Activated CD4-positive, alpha-beta memory T cell treated with anti-CD3 and anti-CD28 coated beads for 36 hours (primary cell): ENCODE measurements at regions of chr16 and their contacts with region 1.

Region 1: GRCh38 chr16:11379420-11379819 is 34.2 kb downstream of the RMI2 start:
- DNase-seq: peak; percentile 88
- H3K4me3 Mint-ChIP-seq: peak overlapping the region; percentile 9
- H3K27ac Mint-ChIP-seq: peak overlapping the region; percentile 79
- H3K4me1 Mint-ChIP-seq: peaks cover 23% of the 10 kb centered on the region
- H3K27me3 Mint-ChIP-seq: peaks cover 2% of the 10 kb centered on the region

Region 2: DNA sequence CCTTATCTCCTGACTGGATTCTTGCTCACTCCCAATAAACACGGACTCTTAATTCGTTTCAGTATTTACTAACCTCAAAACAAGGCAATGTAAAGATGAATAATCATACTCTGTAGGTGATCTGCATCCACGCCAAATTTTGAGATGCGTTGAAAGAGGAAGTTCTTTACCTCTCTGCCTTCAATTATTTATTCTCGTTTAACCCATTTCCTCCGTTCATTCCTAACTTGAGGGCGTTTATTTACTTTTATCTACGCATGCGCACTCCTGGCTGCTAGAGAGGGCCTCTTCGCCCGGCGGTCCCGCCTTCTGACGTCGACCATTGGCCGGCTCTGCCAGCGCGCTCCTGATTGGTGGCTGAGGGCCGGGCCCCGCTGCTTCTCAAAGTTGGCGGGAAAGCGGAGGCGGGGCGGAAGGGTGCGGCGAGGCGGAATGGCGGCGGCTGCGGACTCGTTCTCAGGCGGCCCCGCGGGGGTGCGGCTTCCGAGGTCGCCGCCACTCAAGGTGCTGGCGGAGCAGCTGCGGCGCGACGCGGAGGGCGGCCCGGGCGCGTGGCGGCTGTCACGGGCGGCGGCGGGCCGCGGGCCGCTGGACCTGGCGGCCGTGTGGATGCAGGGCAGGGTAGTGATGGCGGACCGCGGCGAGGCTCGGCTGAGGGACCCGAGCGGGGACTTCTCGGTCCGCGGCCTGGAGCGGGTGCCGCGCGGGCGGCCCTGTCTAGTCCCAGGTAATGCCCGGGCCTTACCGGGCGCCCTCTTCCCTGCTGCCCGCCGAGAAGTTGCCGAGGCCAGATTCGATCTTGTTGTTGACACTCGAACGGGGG is 34.2 kb before region 1 on chr16 and contains the start of gene RMI2:
- CTCF ChIA-PET with region 1: no interaction called
- POLR2A ChIA-PET with region 1: no interaction called
- intact Hi-C with region 1: loop called (anchors 2 kb)
- DNase-seq: peak; percentile 99
- H3K4me3 Mint-ChIP-seq: peak within 1 kb of the TSS; percentile 94
- H3K27ac Mint-ChIP-seq: peak within 1 kb of the TSS; percentile 86
- H3K4me1 Mint-ChIP-seq: peaks cover 47% of the 10 kb centered on the region
- H3K27me3 Mint-ChIP-seq: no peaks in the 10 kb centered on the region
- total RNA-seq, gene RMI2: 68.9 to 69.9 TPM

Region 3: GRCh38 chr16:11363927-11364258 is 15.5 kb before region 1 on chr16:
- CTCF ChIA-PET with region 1: interaction called, 3 read pairs
- POLR2A ChIA-PET with region 1: no interaction called
- intact Hi-C with region 1: loop called (anchors 1 kb)
- DNase-seq: no peak
- H3K4me3 Mint-ChIP-seq: no peak overlapping the region
- H3K27ac Mint-ChIP-seq: no peak overlapping the region
- H3K4me1 Mint-ChIP-seq: peaks cover 34% of the 10 kb centered on the region
- H3K27me3 Mint-ChIP-seq: peaks cover 18% of the 10 kb centered on the region

Region 4: DNA sequence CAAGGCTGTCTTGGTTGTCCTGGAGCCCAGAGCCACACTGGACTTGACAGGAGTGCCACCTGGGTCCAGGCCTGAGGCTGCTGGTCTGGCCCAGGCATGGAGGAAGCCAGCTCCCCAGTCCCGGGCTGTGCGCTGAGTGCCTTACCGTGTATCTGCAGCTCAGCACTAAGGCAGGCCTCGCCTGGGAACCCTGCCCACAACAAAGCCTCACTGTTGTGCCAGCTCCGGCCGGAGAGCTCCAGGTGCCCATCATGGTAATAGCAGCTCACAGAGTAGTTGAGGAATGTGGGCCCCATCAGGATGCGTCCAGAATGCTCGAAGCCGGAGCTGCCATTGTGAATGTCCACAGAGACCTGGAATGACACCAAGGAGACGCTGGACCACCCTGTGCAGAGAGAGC is 38.1 kb after region 1 on chr16:
- CTCF ChIA-PET with region 1: no interaction called
- POLR2A ChIA-PET with region 1: no interaction called
- intact Hi-C with region 1: no loop called
- DNase-seq: no peak
- H3K4me3 Mint-ChIP-seq: no peak overlapping the region
- H3K27ac Mint-ChIP-seq: no peak overlapping the region
- H3K4me1 Mint-ChIP-seq: no peaks in the 10 kb centered on the region
- H3K27me3 Mint-ChIP-seq: no peaks in the 10 kb centered on the region

Region 5: DNA sequence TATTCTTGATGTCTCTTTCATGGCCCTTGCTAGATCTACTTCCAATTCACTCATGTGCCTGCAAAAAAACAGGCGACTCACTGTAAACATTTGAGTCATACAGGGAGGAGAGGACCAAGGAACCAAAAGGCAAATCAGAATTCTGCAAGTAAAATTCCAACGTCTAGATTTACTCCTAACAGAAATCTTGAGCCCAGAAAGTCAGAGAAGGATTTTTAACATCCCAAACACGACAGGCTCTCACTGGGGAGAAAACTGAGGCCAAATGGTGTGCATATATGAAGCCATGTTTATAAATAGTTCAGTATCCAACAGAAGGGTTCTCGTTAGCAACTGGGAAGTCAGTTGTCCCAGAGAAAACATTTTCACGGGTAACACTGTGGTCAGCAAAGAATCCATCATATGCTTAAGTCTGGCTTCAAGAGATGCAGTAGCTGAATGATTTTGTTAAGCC is 167.2 kb after region 1 on chr16:
- CTCF ChIA-PET with region 1: no interaction called
- POLR2A ChIA-PET with region 1: no interaction called
- intact Hi-C with region 1: no loop called
- DNase-seq: no peak
- H3K4me3 Mint-ChIP-seq: no peak overlapping the region
- H3K27ac Mint-ChIP-seq: no peak overlapping the region
- H3K4me1 Mint-ChIP-seq: no peaks in the 10 kb centered on the region
- H3K27me3 Mint-ChIP-seq: no peaks in the 10 kb centered on the region